ENCODE measurements at regions of chr10 and their contacts with region 1.

Region 1: GRCh38 chr10:6144406-6145165 is 55.8 kb downstream of the RBM17 start:
- DNase-seq: peak; percentile 93
- H3K4me3 Mint-ChIP-seq: peak overlapping the region; percentile 80
- H3K27ac Mint-ChIP-seq: peak overlapping the region; percentile 83
- H3K4me1 Mint-ChIP-seq: peaks cover 84% of the 10 kb centered on the region
- H3K27me3 Mint-ChIP-seq: peaks cover 1% of the 10 kb centered on the region

Region 2: DNA sequence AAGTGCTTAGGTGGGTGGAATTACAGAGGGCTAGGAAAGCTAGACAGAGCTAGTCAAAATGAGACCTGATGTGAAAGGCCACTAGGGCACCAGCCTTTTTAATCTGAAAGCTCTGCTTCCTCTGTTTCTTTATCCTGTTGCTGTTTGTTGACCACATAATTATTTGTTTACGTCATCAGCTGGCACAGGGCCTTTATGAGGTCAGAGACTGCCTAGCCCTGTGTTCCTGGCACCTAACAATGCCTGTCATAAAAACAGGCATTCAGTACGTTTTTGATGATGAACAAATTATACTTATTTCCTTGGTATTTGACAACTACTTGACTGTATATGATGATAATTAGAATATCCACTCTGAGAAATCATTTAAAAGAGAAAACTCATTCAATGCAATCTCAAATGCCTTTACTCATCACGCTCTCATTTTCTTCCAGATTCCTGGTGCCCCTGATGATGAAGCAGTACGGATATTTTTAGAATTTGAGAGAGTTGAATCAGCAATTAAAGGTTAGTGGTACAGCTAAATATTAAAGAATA is 29.7 kb before region 1 on chr10:
- CTCF ChIA-PET with region 1: interaction called, 39 read pairs
- POLR2A ChIA-PET with region 1: interaction called, 4 read pairs
- intact Hi-C with region 1: loop called (anchors 1 kb)
- DNase-seq: peak; percentile 46
- H3K4me3 Mint-ChIP-seq: no peak overlapping the region
- H3K27ac Mint-ChIP-seq: peak overlapping the region; percentile 82
- H3K4me1 Mint-ChIP-seq: peaks cover 42% of the 10 kb centered on the region
- H3K27me3 Mint-ChIP-seq: no peaks in the 10 kb centered on the region

Region 3: DNA sequence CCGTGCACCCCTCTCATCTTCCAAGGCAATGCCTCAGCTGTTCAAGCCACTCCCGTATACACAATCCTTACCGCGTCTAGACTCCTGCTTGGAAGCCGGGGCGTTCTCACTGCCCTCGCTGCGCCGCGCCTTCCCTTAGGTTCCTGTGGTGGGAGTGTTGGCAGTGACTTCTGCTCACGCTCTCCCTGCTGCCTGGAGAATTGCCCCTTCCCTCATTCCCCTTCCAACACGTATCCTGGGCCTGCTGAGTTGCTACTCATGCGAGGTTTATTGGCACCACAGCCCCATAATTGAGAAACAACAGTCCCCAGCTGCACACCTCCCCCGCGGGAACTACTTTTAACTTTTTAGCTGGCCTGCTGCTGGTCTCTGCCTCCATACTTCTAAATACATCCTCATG is 23.9 kb before region 1 on chr10:
- CTCF ChIA-PET with region 1: no interaction called
- POLR2A ChIA-PET with region 1: interaction called, 4 read pairs
- intact Hi-C with region 1: loop called (anchors 1 kb)
- DNase-seq: no peak
- H3K4me3 Mint-ChIP-seq: no peak overlapping the region
- H3K27ac Mint-ChIP-seq: no peak overlapping the region
- H3K4me1 Mint-ChIP-seq: peaks cover 29% of the 10 kb centered on the region
- H3K27me3 Mint-ChIP-seq: no peaks in the 10 kb centered on the region

Region 4: DNA sequence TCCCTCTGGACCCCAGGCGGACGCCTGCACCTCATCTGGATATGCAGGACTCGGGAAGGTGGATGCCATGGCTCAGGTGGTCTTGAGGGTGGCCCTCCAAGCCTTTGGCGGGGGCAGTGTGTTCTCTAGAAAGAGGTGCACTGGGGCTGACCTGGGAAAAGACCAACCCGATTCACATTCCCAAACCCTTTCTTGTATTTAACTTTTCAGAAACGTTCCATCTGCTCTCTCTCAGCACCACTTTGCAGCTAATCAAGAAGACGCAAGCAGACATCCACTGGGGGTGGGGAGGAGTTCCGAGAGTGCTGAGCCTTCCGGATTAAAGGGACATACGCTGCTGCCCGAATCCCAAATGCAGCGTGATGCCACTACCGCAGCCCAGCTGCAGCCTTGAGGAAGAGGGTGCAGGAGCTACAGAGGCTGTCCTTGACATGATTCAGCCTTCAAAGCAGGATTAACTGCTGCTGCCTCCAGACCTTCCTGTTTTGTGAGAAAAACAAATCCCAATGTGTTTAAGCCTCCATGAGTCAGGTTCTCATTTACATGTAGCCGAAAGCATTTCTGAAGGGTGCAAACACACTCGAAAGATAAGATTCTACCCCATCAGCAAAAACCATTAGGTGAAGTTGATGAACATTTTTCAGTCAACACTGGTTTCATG is 15.9 kb before region 1 on chr10:
- CTCF ChIA-PET with region 1: no interaction called
- POLR2A ChIA-PET with region 1: interaction called, 21 read pairs
- intact Hi-C with region 1: loop called (anchors 1 kb)
- DNase-seq: peak; percentile 11
- H3K4me3 Mint-ChIP-seq: no peak overlapping the region
- H3K27ac Mint-ChIP-seq: no peak overlapping the region
- H3K4me1 Mint-ChIP-seq: peaks cover 32% of the 10 kb centered on the region
- H3K27me3 Mint-ChIP-seq: no peaks in the 10 kb centered on the region

Region 5: GRCh38 chr10:6163364-6164270 is 19.0 kb after region 1 on chr10:
- CTCF ChIA-PET with region 1: interaction called, 23 read pairs
- POLR2A ChIA-PET with region 1: interaction called, 8 read pairs
- intact Hi-C with region 1: loop called (anchors 2 kb)
- DNase-seq: peak; percentile 94
- H3K4me3 Mint-ChIP-seq: peak overlapping the region; percentile 80
- H3K27ac Mint-ChIP-seq: peak overlapping the region; percentile 94
- H3K4me1 Mint-ChIP-seq: peaks cover 59% of the 10 kb centered on the region
- H3K27me3 Mint-ChIP-seq: no peaks in the 10 kb centered on the region

Region 6: GRCh38 chr10:6275022-6275997 is 130.7 kb after region 1 on chr10:
- CTCF ChIA-PET with region 1: no interaction called
- POLR2A ChIA-PET with region 1: no interaction called
- intact Hi-C with region 1: loop called (anchors 10 kb)
- DNase-seq: peak; percentile 97
- H3K4me3 Mint-ChIP-seq: peak overlapping the region; percentile 70
- H3K27ac Mint-ChIP-seq: peak overlapping the region; percentile 97
- H3K4me1 Mint-ChIP-seq: peaks cover 62% of the 10 kb centered on the region
- H3K27me3 Mint-ChIP-seq: no peaks in the 10 kb centered on the region

Measured in activated CD4-positive, alpha-beta memory T cell treated with anti-CD3 and anti-CD28 coated beads for 36 hours (primary cell).